ENCODE measurements at regions of chr6 and their contacts with region 1.

Region 1: GRCh38 chr6:83057705-83058321 is 7.8 kb downstream of the UBE3D start:
- DNase-seq: peak in 4 of 5 donors; percentile 42 to 71 (median 51)
- H3K4me3 ChIP-seq: no peak overlapping the region
- H3K27ac ChIP-seq: no peak overlapping the region
- H3K4me1 ChIP-seq: no peaks in the 10 kb centered on the region
- H3K27me3 ChIP-seq: no peaks in the 10 kb centered on the region
- CTCF ChIP-seq: peak; percentile 57

Region 2: GRCh38 chr6:82270881-82271645 is 786.8 kb before region 1 on chr6:
- intact Hi-C with region 1: loop called (anchors 10 kb)
- DNase-seq: peak in 2 of 5 donors; percentile 40 to 58
- H3K4me3 ChIP-seq: no peak overlapping the region
- H3K27ac ChIP-seq: no peak overlapping the region
- H3K4me1 ChIP-seq: no peaks in the 10 kb centered on the region
- H3K27me3 ChIP-seq: no peaks in the 10 kb centered on the region
- CTCF ChIP-seq: peak; percentile 39

Measured in kidney (tissue), 22 donors.